Cardiac septum (tissue), 1 donor: ENCODE measurements at regions of chr10 and their contacts with region 1.

Region 1: GRCh38 chr10:35635576-35635975 is 6.5 kb downstream of the FZD8 start:
- DNase-seq: no peak

Region 2: DNA sequence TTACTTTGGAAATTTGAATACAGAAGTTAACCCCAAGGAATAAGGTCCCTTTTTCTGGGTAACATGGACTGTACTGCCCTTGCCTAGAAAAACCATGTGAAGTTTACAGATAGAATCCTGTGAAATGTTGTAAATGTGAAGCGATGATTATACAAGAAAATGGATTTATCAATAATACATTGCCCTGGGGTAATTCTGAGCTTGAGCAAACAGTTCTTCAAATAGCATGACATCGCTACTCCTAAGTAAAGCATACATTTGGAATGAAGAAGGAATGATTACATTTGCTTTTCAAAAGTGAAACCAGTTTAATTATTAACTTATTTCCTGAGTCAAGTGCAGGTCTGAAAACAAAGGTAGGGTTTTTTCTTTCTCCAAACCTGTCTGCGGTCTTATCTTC is 49.8 kb after region 1 on chr10:
- intact Hi-C with region 1: no loop called
- DNase-seq: no peak

Region 3: DNA sequence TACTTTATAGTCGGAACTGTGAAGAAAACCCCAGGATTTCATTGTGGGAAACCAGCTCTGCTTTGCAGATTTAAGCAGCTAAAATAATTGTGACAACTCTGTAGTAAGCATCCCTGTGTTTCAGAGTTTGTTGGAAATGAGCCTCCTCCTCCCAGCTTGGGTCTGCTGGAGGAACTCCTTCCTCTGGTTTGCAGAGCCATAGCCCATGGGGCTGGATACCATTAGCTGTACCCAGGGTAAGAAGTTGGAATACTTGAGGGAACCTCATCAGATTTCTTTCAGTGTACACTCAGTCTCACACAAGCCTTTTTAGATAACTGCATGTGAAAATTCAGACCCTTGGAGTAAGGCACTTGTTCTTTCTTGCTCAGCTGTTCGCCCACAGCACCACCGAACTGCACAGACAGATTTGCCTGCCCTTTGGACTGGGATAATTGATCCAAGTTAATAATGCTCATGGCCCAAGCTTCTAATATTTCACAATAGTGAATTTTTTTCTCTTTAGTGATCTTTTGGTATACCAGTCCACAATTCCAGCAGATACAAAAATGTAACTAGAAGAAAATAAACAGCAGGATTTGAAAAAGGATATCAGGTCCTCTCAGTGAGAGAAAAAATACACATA is 473.9 kb after region 1 on chr10:
- intact Hi-C with region 1: no loop called
- DNase-seq: no peak

Region 4: DNA sequence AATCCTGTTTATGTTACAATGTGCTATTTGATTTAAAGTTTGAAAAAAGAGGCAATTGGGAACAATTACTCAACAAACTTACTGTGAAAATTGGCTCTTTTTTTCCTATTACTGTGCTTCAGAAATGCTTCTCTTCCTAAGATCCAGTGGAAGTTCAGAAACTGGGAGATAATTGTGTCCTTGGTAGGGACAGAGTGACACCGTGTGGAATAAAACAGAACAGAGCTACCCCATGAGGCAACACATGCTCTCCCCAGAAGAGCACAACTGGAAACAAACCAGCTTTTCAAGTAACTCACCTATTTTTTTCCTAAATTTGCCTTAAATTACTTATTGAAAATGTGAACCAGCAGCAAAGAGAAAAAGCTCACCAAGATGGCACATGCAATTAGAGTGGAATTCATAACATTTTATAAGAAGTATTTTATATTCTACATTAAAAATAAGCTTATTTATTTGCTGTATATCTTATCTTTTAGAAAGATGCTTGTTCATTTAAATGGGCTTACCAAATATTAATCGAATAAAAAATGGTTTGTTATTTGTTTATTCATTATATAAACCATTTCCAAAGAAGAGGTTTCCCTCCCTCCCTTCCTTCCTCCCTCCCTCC is 1143.8 kb after region 1 on chr10:
- intact Hi-C with region 1: loop called (anchors 2 kb)
- DNase-seq: no peak

Region 5: DNA sequence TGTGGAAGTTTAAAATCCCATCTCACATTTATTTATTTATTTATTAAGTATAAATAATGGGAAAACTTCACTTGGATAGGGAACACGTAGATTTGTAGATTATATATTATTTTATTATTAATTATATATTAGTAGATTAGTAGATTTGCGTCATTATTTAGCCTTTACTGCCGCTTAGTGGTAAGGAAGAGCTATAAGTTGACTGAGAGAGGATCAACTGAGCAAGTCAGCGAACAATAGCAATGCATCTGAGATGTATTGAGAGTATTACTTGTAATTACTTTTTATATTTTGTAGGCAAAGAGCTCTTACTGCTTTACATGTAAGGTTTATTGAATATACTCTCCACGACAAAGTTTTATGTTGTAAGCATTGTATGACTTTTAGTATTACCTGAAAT is 1245.3 kb after region 1 on chr10:
- intact Hi-C with region 1: loop called (anchors 5 kb)
- DNase-seq: no peak